ENCODE measurements at regions of chr20 and their contacts with region 1.

Region 1: GRCh38 chr20:57919049-57919448 is 209.2 kb upstream of the PMEPA1 start:
- DNase-seq: no peak
- H3K4me3 ChIP-seq: no peak overlapping the region
- H3K4me3 Mint-ChIP-seq: no peak overlapping the region
- H3K27ac ChIP-seq: no peak overlapping the region
- H3K27ac Mint-ChIP-seq: no peak overlapping the region
- H3K4me1 ChIP-seq: peaks cover 7 to 9% of the 10 kb centered on the region in 2 donors
- H3K4me1 Mint-ChIP-seq: no peaks in the 10 kb centered on the region
- H3K27me3 ChIP-seq: no peaks in the 10 kb centered on the region
- H3K27me3 Mint-ChIP-seq: peaks cover 0 to 2% (median 0%) of the 10 kb centered on the region in 3 donors
- CTCF ChIP-seq: no peak

Region 2: GRCh38 chr20:57851025-57851682 is 67.9 kb before region 1 on chr20:
- intact Hi-C with region 1: loop called in 1 of 2 experiments (anchors 2 kb)
- DNase-seq: no peak
- H3K4me3 ChIP-seq: no peak overlapping the region
- H3K4me3 Mint-ChIP-seq: no peak overlapping the region
- H3K27ac ChIP-seq: no peak overlapping the region
- H3K27ac Mint-ChIP-seq: no peak overlapping the region
- H3K4me1 ChIP-seq: no peaks in the 10 kb centered on the region
- H3K4me1 Mint-ChIP-seq: no peaks in the 10 kb centered on the region
- H3K27me3 ChIP-seq: no peaks in the 10 kb centered on the region
- H3K27me3 Mint-ChIP-seq: peaks cover 2 to 5% (median 3%) of the 10 kb centered on the region in 3 donors
- CTCF ChIP-seq: no peak

Region 3: DNA sequence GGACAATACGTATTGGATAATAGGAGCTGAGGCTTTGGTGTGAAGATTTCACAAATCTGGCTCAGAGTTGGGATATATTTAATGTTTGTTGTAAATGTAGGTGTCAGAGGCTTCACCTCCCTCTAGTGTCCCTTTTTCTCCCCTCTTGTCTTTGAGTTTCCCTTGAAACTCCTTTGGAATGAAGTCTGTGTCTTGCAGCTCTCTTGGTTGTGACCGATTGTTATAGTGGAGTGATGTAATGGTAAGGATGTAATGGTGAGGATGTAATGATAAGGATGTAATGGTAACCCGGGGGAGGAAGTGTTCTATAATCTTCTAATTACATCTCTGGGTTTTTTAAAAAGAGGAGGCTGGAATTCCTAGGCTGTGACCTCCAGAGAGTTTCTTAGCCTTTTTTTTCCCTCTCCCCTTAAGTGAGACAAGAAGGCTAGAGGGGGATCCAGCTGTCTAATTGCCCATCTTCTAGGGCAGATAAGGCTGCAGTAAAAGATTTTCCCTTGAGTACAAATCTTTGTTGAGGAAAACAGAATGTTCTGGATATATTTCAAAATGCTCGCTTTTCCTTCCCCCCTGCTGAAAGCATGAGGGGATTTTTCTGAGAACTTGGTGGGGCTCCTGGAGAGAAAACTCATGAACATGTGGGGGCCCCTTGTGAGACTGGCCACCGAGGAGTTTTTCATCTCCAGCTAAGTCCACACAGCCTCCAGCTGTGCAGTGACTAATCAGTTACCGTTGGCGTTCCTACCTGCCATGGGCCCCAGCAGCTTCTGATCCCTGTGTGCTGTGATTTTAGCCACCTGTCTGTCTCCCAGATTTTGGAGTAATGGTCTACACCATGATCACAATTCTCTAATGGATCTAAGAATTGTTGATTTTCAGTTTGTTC is 52.6 kb before region 1 on chr20:
- intact Hi-C with region 1: no loop called
- DNase-seq: no peak
- H3K4me3 ChIP-seq: no peak overlapping the region
- H3K4me3 Mint-ChIP-seq: no peak overlapping the region
- H3K27ac ChIP-seq: no peak overlapping the region
- H3K27ac Mint-ChIP-seq: no peak overlapping the region
- H3K4me1 ChIP-seq: no peaks in the 10 kb centered on the region
- H3K4me1 Mint-ChIP-seq: no peaks in the 10 kb centered on the region
- H3K27me3 ChIP-seq: no peaks in the 10 kb centered on the region
- H3K27me3 Mint-ChIP-seq: peaks cover 8 to 17% (median 11%) of the 10 kb centered on the region in 3 donors
- CTCF ChIP-seq: no peak